ENCODE measurements at regions of chr10 and their contacts with region 1.

Region 1: DNA sequence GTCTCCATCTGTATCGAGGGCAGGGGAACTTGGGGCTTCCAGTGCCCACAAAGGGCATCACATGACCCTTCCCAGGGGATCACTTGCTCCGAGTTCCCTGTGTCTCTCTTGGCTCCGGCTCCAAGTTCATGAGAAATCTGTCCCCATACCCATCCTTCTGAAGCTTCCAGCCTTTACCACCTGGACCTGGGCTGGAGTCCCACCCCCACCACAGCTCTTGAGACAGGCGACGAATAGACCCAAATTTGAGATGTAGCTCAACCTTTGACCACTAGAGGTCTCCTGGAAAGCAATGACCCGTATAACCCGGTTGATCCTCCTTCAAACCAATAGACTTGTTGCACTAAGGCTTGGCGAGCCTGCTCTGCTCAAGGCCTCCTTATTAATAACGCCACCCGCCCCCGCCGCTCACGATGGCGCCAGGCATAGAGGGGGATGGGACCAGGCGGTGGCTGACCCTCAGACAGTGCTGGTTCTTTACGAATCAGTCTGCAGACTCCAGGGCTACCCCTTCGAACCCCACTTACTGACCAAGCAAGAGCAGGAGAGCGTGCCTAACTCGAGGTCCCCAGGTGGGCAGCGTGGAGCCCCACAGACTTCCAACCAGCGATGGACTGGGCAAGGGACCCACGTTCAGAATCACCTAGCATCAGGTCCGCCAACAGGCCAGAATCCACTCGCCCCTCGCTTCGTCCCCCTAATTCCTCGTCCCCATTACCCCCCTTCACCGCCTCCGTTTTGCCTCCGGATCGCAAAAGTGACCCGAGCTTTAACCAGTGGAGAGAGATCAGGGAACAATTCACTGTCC is 4.4 kb upstream of the ARID5B start:
- DNase-seq: peak; percentile 95
- H3K4me3 ChIP-seq: peak overlapping the region; percentile 93
- H3K27ac ChIP-seq: peak overlapping the region; percentile 96
- H3K4me1 ChIP-seq: peaks cover 36% of the 10 kb centered on the region
- CTCF ChIP-seq: peak; percentile 83

Region 2: GRCh38 chr10:61943674-61944410 is 46.8 kb after region 1 on chr10:
- CTCF ChIA-PET with region 1: no interaction called
- POLR2A ChIA-PET with region 1: interaction called, 38 read pairs
- intact Hi-C with region 1: loop called (anchors 1 kb)
- DNase-seq: peak; percentile 68
- H3K4me3 ChIP-seq: peak overlapping the region; percentile 30
- H3K27ac ChIP-seq: peak overlapping the region; percentile 88
- H3K4me1 ChIP-seq: peaks cover 67% of the 10 kb centered on the region
- CTCF ChIP-seq: peak; percentile 69

Region 3: GRCh38 chr10:61987951-61988379 is 90.9 kb after region 1 on chr10:
- CTCF ChIA-PET with region 1: interaction called, 3 read pairs
- POLR2A ChIA-PET with region 1: interaction called, 171 read pairs
- intact Hi-C with region 1: loop called (anchors 1 kb)
- DNase-seq: peak; percentile 90
- H3K4me3 ChIP-seq: peak overlapping the region; percentile 55
- H3K27ac ChIP-seq: peak overlapping the region; percentile 99
- H3K4me1 ChIP-seq: peaks cover 98% of the 10 kb centered on the region
- CTCF ChIP-seq: no peak

Region 4: DNA sequence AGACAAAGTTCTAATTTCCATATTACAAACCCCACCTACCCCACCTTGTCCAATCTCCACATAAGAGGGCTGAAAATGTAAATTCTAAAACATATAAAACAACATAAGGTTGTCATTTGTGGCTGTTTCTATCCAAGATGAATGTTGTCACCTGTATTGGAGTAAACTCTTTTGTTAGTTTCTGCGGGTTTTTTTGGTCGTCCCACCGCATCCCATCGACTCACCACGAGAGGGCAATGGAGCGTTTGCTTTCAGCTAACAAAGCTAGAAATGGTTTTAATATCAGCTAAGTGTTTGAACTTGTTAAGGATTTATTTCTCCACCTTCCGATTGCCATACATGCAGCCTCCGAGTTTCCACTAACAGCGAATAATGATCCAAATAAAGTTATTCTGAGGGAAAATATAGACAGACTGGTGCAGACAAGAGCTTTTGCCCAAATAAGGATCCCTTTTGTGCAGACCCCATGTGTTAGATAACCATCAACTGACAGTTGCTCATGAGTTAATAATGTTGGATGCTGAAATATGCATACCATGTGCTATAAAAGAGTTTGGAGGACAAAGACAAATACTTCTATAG is 141.6 kb after region 1 on chr10:
- CTCF ChIA-PET with region 1: no interaction called
- POLR2A ChIA-PET with region 1: interaction called, 277 read pairs
- intact Hi-C with region 1: loop called (anchors 2 kb)
- DNase-seq: peak; percentile 85
- H3K4me3 ChIP-seq: peak overlapping the region; percentile 18
- H3K27ac ChIP-seq: peak overlapping the region; percentile 56
- H3K4me1 ChIP-seq: peaks cover 80% of the 10 kb centered on the region
- CTCF ChIP-seq: peak; percentile 98

Region 5: DNA sequence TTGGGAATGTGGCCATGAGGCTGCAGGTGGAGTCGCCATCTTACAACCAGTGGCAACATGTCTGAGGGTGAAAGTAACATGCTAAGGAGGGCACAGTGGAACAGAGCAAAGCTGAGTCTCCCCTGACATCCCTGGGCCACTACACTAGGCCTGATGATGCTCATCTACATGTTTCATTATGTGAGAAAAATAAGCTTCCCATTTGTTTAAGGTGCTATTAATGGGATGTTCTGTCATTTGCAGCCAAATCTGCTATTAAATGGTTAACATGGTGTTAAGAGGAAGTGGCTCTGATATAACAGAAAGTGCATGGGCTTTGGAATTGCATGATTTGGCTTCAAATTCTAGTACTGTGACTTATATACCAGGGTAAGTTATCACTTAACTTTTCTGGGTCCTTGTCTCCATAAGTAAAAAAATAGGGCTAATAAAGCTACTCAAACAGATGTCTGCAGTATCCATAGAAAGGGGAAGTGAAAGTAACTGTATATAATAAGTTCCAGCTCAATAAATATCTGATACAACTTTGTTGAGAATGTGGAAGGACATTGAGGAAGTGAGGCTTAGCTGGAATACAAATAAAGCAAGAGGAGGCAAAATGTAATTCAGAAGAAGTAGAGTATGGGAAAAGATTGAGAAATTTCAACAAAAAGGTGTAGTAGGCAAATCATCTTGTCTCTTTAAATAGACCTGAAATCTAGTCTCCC is 212.7 kb after region 1 on chr10:
- CTCF ChIA-PET with region 1: interaction called, 3 read pairs
- POLR2A ChIA-PET with region 1: interaction called, 15 read pairs
- intact Hi-C with region 1: loop called (anchors 5 kb)
- DNase-seq: peak; percentile 89
- H3K4me3 ChIP-seq: peak overlapping the region; percentile 46
- H3K27ac ChIP-seq: peak overlapping the region; percentile 90
- H3K4me1 ChIP-seq: peaks cover 59% of the 10 kb centered on the region
- CTCF ChIP-seq: no peak

Region 6: GRCh38 chr10:63866075-63866746 is 1969.2 kb after region 1 on chr10:
- CTCF ChIA-PET with region 1: interaction called, 11 read pairs
- POLR2A ChIA-PET with region 1: no interaction called
- intact Hi-C with region 1: no loop called
- DNase-seq: peak; percentile 46
- H3K4me3 ChIP-seq: no peak overlapping the region
- H3K27ac ChIP-seq: no peak overlapping the region
- H3K4me1 ChIP-seq: no peaks in the 10 kb centered on the region
- CTCF ChIP-seq: peak; percentile 86